Right ventricle myocardium inferior (tissue), 1 donor: ENCODE measurements at regions of chr11 and their contacts with region 1.

Region 1: GRCh38 chr11:10792398-10792975 is 16.2 kb downstream of the EIF4G2 start:
- DNase-seq: peak; percentile 94
- ATAC-seq: peak; percentile 93

Region 2: GRCh38 chr11:10906513-10906912 is 114.0 kb after region 1 on chr11:
- intact Hi-C with region 1: loop called (anchors 5 kb)
- DNase-seq: no peak
- ATAC-seq: peak; percentile 51

Region 3: GRCh38 chr11:11022125-11022730 is 229.7 kb after region 1 on chr11:
- intact Hi-C with region 1: loop called (anchors 2 kb)
- DNase-seq: no peak
- ATAC-seq: no peak